K562 (cell line): ENCODE measurements at regions of chr17 and their contacts with region 1.

Region 1: DNA sequence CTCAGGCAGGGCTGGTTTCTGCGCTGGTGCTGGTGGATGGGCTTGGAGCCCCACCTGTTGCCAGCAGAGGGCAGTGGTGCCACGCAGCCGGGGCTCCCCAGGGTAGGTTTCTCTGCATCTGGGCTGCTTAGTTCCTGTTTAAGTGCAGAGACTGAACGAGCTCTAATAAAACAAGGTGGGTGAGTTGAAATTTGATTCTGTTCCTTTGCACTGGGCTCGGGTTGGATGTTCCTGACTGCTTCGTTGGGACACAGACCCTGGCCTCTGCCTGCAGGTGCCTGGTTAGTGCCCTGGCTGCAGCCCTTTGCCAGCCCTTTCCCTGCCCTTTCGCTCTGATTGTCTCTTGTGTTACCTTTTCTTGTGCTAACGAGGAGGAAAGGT is 30.0 kb downstream of the TBCD start:
- DNase-seq: peak; percentile 61 to 79 (median 74)
- ATAC-seq: peak; percentile 97
- H3K4me3 ChIP-seq: no peak overlapping the region
- H3K27ac ChIP-seq: no peak overlapping the region
- H3K4me1 ChIP-seq: peaks cover 0 to 10% of the 10 kb centered on the region in 2 experiments; a peak in 2 of 5 replicates
- H3K27me3 ChIP-seq: no peaks in the 10 kb centered on the region
- CTCF ChIP-seq: peak; percentile 85 to 93 (median 89)
- EP300 ChIP-seq: no peak
- POLR2A ChIP-seq: no peak
- RAD21 ChIP-seq: peak; percentile 87 to 90

Region 2: DNA sequence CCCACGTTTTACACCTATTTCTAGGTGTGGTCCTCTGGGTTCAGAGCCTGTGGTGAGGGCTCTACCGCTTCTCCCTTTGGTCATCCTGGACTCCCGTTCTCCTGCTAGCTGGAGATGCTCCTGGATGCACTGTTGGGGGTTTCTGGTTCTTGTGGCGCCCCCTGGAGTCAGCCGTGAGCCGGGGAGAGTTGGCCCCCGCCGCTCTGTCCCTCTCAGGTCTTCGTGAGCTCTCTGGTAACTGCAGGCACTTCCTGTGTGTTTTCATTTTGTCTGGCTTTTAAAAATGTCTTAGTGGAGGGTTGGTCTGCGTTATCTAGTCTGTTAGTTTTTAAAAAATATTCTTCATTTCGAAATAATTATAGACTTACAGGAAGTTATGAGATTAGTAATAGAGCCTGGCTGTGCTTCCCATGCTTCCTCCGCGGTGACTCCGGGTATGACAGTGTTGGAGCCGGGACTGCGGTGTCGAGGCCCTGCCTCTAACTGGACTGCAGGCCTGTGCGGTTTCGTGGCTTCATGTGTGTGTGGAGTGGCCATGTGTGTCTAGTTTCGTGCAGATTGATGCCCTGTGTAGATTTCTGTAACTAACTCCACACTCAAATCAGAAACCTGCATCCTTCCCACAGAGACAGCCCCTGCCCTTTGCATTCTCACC is 135.9 kb after region 1 on chr17:
- CTCF ChIA-PET with region 1: interaction called, 3 read pairs
- POLR2A ChIA-PET with region 1: no interaction called
- in situ Hi-C with region 1: no loop called
- intact Hi-C with region 1: loop called (anchors 5 kb)
- DNase-seq: peak; percentile 36 to 63 (median 52)
- ATAC-seq: peak; percentile 87
- H3K4me3 ChIP-seq: no peak overlapping the region
- H3K27ac ChIP-seq: no peak overlapping the region
- H3K4me1 ChIP-seq: peaks cover 0 to 10% of the 10 kb centered on the region in 2 experiments; a peak in 1 of 5 replicates
- H3K27me3 ChIP-seq: no peaks in the 10 kb centered on the region
- CTCF ChIP-seq: peak; percentile 52 to 75 (median 64)
- EP300 ChIP-seq: no peak
- POLR2A ChIP-seq: no peak
- RAD21 ChIP-seq: peak; percentile 24 to 64; a peak in 3 of 4 replicates

Region 3: DNA sequence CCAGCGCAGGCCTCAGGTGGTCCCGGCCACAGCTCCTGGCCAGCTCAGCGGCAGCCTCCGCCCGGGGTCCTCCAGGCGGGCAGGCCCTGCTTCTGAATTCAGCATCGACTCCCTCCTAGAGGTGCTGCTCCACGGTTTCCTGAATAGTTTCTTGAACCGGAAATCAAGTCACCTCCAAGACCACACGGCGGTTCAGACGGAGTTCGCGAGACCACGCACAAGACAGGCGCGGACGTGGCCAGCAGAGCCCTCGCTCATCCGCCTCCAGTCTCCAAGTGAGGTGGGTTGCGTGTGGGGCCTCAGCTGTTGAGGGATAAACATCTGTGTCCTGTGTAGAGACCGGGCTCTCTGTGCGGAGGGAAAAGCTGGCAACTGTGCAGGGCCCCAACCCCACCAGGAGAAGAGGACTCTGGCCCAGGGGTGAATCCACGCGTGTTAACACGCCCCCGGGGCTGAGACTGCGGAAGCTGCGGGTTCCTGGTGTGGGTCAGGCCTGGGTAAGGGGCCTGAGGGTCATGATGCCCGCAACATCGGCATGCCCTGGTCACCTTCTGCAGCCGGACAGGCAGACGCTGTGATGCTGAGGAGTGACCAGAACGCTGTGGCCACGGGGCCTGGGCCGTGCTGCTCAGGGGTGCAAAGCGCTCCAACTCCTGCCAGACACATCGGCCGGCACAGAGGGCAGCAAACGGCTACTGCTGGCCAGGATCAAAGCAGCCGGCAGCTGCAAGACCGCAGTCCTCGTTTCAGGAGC is 242.5 kb after region 1 on chr17:
- CTCF ChIA-PET with region 1: no interaction called
- POLR2A ChIA-PET with region 1: no interaction called
- in situ Hi-C with region 1: no loop called
- intact Hi-C with region 1: no loop called
- DNase-seq: no peak
- ATAC-seq: no peak
- H3K4me3 ChIP-seq: no peak overlapping the region
- H3K27ac ChIP-seq: no peak overlapping the region
- H3K4me1 ChIP-seq: peaks cover 0 to 7% of the 10 kb centered on the region in 2 experiments; a peak in 1 of 5 replicates
- H3K27me3 ChIP-seq: no peaks in the 10 kb centered on the region
- CTCF ChIP-seq: no peak
- EP300 ChIP-seq: no peak
- POLR2A ChIP-seq: no peak
- RAD21 ChIP-seq: no peak

Region 4: GRCh38 chr17:83204233-83204725 is 422.4 kb after region 1 on chr17:
- CTCF ChIA-PET with region 1: interaction called, 16 read pairs
- POLR2A ChIA-PET with region 1: no interaction called
- in situ Hi-C with region 1: no loop called
- intact Hi-C with region 1: no loop called
- DNase-seq: no peak
- ATAC-seq: no peak
- H3K4me3 ChIP-seq: no peak overlapping the region
- H3K27ac ChIP-seq: no peak overlapping the region
- H3K4me1 ChIP-seq: peaks cover 0 to 3% of the 10 kb centered on the region in 2 experiments; a peak in 2 of 5 replicates
- H3K27me3 ChIP-seq: peaks cover 0 to 19% of the 10 kb centered on the region in 2 experiments; a peak in 3 of 5 replicates
- CTCF ChIP-seq: no peak
- EP300 ChIP-seq: no peak
- POLR2A ChIP-seq: no peak
- RAD21 ChIP-seq: no peak